HEK293T (cell line): ENCODE measurements at regions of chr17 and their contacts with region 1.

Region 1: GRCh38 chr17:42554250-42555121 is 1.8 kb downstream of the HSD17B1 start:
- DNase-seq: peak; percentile 86

Region 2: GRCh38 chr17:42541041-42541833 is 13.2 kb before region 1 on chr17:
- CTCF ChIA-PET with region 1: interaction called, 5 read pairs
- POLR2A ChIA-PET with region 1: interaction called, 37 read pairs
- DNase-seq: no peak

Region 3: GRCh38 chr17:42566883-42567573 is 12.5 kb after region 1 on chr17 and contains the start of gene MLX:
- CTCF ChIA-PET with region 1: no interaction called
- POLR2A ChIA-PET with region 1: interaction called, 30 read pairs
- DNase-seq: peak; percentile 99

Region 4: GRCh38 chr17:42850954-42851353 is 296.5 kb after region 1 on chr17 and contains the start of gene AOC3:
- CTCF ChIA-PET with region 1: no interaction called
- POLR2A ChIA-PET with region 1: no interaction called
- DNase-seq: no peak